GM10248 (cell line): ENCODE measurements at regions of chrX and their contacts with region 1.

Region 1: GRCh38 chrX:110853610-110854009 is 58.0 kb upstream of the CHRDL1 start:
- DNase-seq: no peak
- CTCF ChIP-seq: no peak

Region 2: DNA sequence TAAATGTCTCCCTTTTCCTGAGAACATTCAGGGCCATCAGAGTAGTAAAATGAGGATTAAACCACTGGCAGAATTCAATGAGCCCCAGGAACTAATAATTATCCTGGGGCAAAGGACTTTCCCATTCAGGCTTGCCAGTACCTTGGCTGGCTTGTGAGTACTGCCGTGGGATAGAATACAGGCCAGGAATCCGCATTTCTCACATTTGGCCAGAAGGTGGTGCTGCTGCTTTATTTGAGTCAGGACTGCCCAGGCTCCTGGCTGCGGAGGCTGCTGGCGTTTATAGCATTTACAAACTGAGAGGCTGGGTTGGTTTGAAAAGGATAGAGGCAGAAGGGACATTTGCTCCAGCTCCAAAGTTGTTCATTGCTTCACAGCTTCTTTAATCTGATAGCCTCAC is 403.6 kb before region 1 on chrX:
- CTCF ChIA-PET with region 1: interaction called, 61 read pairs
- POLR2A ChIA-PET with region 1: no interaction called
- DNase-seq: peak; percentile 62
- CTCF ChIP-seq: peak; percentile 68

Region 3: DNA sequence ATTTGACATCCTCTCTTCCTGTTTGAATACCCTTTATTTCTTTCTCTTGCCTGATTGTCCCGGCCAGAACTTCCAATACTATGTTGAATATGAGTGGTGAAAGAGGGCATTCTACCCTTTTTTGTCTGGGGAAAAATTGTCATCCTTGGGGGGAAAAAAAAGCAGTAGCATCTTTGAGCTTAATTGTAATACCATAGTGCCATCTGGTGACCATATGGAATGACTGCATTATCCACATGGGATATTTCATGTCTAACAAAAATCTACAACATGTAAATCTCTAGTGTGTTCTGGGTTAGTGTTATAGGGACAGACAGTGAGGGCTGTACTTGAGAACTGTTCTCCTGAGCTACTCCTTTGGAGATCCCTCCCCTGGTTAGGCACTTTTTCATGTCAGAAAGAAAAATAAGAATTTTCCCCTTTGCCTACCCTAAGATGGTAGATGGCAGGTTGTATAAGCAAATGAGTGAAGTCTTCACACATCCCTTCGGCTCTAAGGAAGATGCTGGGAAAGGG is 390.7 kb after region 1 on chrX:
- CTCF ChIA-PET with region 1: interaction called, 14 read pairs
- POLR2A ChIA-PET with region 1: no interaction called
- DNase-seq: peak; percentile 24
- CTCF ChIP-seq: peak; percentile 37